Activated naive CD4-positive, alpha-beta T cell treated with anti-CD3 and anti-CD28 coated beads for 36 hours (primary cell): ENCODE measurements at regions of chr16 and their contacts with region 1.

Region 1: GRCh38 chr16:11386791-11387546 is 41.7 kb downstream of the RMI2 start:
- DNase-seq: no peak
- H3K4me3 Mint-ChIP-seq: no peak overlapping the region
- H3K27ac Mint-ChIP-seq: no peak overlapping the region
- H3K4me1 Mint-ChIP-seq: no peaks in the 10 kb centered on the region
- H3K27me3 Mint-ChIP-seq: no peaks in the 10 kb centered on the region

Region 2: GRCh38 chr16:11133344-11133943 is 253.5 kb before region 1 on chr16:
- CTCF ChIA-PET with region 1: no interaction called
- intact Hi-C with region 1: no loop called
- DNase-seq: no peak
- H3K4me3 Mint-ChIP-seq: no peak overlapping the region
- H3K27ac Mint-ChIP-seq: no peak overlapping the region
- H3K4me1 Mint-ChIP-seq: peaks cover 41% of the 10 kb centered on the region
- H3K27me3 Mint-ChIP-seq: no peaks in the 10 kb centered on the region

Region 3: DNA sequence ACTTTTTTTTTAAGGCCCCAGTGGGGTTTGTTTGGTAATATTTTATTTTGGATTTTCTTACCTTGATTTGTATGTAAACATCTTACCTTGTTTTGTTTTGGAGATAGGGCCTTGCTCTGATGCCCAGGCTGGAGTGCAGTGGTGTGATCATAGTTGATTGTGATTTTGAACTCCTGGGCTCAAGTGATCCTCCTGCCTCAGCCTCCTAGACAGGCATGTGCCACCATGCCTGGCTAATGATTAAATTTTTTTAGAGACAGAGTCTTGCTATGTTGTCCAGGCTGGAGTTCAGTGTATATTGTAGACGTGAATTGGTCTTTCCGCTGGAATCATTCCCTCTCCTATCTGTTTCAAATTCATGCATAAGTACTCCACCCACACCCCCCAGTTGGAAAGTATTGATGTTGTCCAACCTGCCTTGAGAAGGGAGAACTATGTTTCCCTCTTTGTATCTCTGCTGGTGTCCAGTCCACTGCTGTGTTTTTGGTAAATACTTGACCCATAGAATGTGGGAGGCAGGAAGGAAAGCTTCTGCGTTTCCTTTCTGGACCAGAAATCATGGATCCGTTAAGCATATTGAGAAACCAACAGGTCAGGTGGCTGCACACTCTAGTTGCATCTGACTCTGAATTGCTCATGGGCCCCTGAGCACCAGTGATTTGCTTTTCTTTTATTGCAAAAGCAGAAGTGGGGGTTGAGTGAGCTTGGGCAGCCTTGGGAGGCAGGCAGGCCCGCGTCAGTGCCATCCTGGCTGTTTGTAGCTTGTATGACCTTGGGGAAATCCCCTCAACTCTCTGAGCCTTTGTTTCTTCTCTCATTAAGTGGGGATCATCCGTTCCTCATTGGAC is 16.7 kb before region 1 on chr16:
- CTCF ChIA-PET with region 1: interaction called, 14 read pairs
- intact Hi-C with region 1: no loop called
- DNase-seq: peak; percentile 42
- H3K4me3 Mint-ChIP-seq: no peak overlapping the region
- H3K27ac Mint-ChIP-seq: no peak overlapping the region
- H3K4me1 Mint-ChIP-seq: peaks cover 11% of the 10 kb centered on the region
- H3K27me3 Mint-ChIP-seq: no peaks in the 10 kb centered on the region